T47D (cell line): ENCODE measurements at regions of chr3 and their contacts with region 1.

Region 1: DNA sequence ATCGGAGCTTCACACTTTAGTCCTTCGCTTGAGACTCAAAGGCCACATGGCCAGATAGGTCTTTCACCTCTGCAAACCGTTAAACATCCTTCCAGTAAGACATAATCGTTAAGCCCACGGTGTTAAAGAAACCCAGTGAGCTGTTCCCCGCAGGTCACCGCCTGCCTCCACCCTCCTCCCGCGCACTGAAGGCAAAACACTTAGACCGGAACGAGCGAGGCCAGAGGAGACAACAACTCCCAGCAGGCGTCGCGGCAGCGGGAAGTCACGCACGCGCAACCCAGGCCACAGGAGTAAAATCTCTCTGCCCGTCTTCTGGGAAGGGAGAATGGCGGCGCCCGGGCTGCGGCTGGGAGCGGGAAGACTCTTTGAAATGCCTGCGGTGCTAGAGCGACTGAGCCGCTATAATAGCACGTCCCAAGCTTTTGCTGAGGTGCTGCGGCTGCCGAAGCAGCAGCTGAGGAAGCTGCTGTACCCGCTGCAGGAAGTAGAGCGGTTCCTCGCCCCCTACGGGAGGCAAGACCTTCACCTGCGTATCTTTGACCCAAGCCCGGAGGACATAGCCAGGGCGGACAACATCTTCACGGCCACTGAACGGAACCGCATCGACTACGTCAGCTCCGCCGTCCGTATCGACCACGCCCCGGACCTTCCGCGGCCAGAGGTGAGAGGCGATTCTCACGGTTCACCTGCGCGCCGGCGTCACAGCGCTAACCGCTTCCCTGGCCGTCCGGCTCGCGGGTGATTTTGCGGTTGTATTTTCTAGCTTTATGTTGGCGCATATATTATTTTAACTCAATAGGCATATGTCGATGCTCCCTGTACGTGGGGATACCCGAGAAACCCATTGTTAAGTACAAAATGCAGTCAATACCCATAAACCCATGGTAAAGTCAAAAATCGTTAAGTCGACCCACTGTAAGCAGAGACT is at the start of gene GTPBP8:
- DNase-seq: peak; percentile 76 to 92

Region 2: GRCh38 chr3:112253301-112253971 is 737.5 kb before region 1 on chr3:
- in situ Hi-C with region 1: no loop called
- DNase-seq: no peak

Region 3: DNA sequence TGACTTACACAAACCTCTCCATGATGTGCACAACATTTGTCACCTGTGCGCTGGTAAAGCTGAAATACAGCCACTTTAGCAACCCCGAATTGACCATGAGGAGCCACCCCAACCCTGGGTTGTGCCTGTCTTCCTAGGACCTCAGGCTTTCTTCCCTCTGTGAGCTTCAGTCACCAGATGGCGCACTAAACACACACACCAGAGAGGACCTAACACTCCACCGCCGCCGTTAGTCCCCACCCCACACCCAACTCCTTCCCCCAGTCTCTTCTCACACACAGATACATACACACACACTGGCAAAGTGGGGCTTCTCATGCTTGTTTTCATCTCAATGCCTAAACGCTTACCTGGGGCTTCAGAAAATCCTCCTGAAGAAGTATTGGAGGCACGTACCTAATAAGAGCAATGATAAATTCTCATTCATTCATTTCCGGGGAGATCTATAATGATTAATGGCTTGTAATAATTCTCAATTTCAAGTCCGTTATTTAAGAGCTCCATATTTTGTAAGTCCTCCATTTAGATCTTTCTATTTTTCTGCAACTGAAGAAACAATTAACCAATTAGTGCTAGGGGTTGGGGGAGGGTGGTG is 347.9 kb before region 1 on chr3:
- in situ Hi-C with region 1: loop called (anchors 25 kb)
- DNase-seq: peak; percentile 57 to 91

Region 4: DNA sequence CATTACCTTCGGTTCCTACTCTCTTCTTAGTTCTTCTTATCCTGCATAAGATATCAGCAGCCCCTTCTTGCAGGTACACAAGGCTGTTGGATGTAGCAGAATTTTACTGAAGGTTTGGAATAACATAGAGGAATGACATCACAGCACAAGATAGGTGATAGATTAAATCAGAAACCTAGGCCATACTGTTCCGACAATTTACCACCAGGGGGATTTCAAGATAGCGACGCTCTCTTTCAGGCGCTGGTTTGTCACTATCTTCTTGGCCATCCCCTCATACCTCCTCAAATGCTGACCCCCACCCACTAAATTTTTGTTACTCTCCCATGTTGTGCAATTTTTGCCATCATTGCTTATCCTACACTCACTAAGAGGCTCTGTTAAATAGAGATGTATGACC is 545.0 kb after region 1 on chr3:
- in situ Hi-C with region 1: no loop called
- DNase-seq: peak in 1 of 2 experiments; percentile 55